Panc1 (cell line): ENCODE measurements at regions of chr16 and their contacts with region 1.

Region 1: GRCh38 chr16:11915644-11916523 is at the start of gene GSPT1:
- DNase-seq: peak; percentile 87
- ATAC-seq: peak; percentile 94
- H3K4me3 ChIP-seq: peak within 1 kb of the TSS; percentile 77 to 92
- H3K27ac ChIP-seq: peak within 1 kb of the TSS; percentile 98
- H3K4me1 ChIP-seq: peaks cover 25% of the 10 kb centered on the region
- H3K27me3 ChIP-seq: no peaks in the 10 kb centered on the region
- CTCF ChIP-seq: no peak
- total RNA-seq, gene GSPT1: 194 TPM

Region 2: GRCh38 chr16:11783319-11784037 is 132.4 kb before region 1 on chr16:
- CTCF ChIA-PET with region 1: no interaction called
- POLR2A ChIA-PET with region 1: interaction called, 14 read pairs
- in situ Hi-C with region 1: no loop called
- intact Hi-C with region 1: no loop called
- DNase-seq: no peak
- ATAC-seq: peak; percentile 71
- H3K4me3 ChIP-seq: peak overlapping the region; percentile 17 to 46
- H3K27ac ChIP-seq: peak overlapping the region; percentile 88
- H3K4me1 ChIP-seq: peaks cover 43% of the 10 kb centered on the region
- H3K27me3 ChIP-seq: no peaks in the 10 kb centered on the region
- CTCF ChIP-seq: no peak

Region 3: GRCh38 chr16:11806721-11807120 is 109.2 kb before region 1 on chr16:
- CTCF ChIA-PET with region 1: no interaction called
- POLR2A ChIA-PET with region 1: no interaction called
- in situ Hi-C with region 1: no loop called
- intact Hi-C with region 1: no loop called
- DNase-seq: no peak
- ATAC-seq: no peak
- H3K4me3 ChIP-seq: no peak overlapping the region
- H3K27ac ChIP-seq: no peak overlapping the region
- H3K4me1 ChIP-seq: no peaks in the 10 kb centered on the region
- H3K27me3 ChIP-seq: no peaks in the 10 kb centered on the region
- CTCF ChIP-seq: no peak

Region 4: DNA sequence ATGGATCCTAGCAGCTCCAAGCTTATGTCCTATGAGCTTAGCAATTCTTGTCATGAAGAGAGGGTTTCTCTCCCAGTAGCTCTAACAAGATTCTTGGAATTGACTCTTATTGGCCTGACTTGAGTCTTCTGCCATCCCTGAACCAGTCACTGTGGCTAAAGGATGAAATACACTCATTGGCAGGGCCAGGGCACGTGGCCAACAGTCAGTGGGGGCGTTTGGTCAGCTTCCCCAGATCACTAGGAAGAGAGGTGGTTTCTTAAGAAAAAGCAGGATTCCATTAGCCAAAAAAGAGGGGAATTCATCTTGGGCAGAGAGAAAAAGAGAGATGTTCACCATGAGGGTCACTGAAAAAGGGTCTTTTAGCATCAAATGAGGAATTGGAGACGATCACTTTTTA is 423.8 kb after region 1 on chr16:
- CTCF ChIA-PET with region 1: no interaction called
- POLR2A ChIA-PET with region 1: interaction called, 10 read pairs
- in situ Hi-C with region 1: no loop called
- intact Hi-C with region 1: no loop called
- DNase-seq: no peak
- ATAC-seq: no peak
- H3K4me3 ChIP-seq: no peak overlapping the region
- H3K27ac ChIP-seq: no peak overlapping the region
- H3K4me1 ChIP-seq: no peaks in the 10 kb centered on the region
- H3K27me3 ChIP-seq: no peaks in the 10 kb centered on the region
- CTCF ChIP-seq: no peak